Naive thymus-derived CD4-positive, alpha-beta T cell (primary cell): ENCODE measurements at regions of chr15 and their contacts with region 1.

Region 1: GRCh38 chr15:43329960-43330779 is at the start of gene LCMT2:
- DNase-seq: peak; percentile 80 to 95 (median 92)
- ATAC-seq: peak; percentile 92
- H3K4me3 ChIP-seq: peak within 1 kb of the TSS; percentile 84
- H3K4me3 Mint-ChIP-seq: peak within 1 kb of the TSS; percentile 89 to 98 (median 96)
- H3K27ac ChIP-seq: peak within 1 kb of the TSS; percentile 88
- H3K27ac Mint-ChIP-seq: peak within 1 kb of the TSS; percentile 93 to 99 (median 99)
- H3K4me1 ChIP-seq: peaks cover 19 to 22% of the 10 kb centered on the region in 2 donors
- H3K4me1 Mint-ChIP-seq: peaks cover 19 to 54% (median 46%) of the 10 kb centered on the region in 7 donors
- H3K27me3 ChIP-seq: no peaks in the 10 kb centered on the region
- H3K27me3 Mint-ChIP-seq: peaks cover 0 to 4% (median 0%) of the 10 kb centered on the region in 5 donors
- total RNA-seq, gene LCMT2: 10.1 to 19.1 (median 15.0) TPM

Region 2: GRCh38 chr15:42575188-42576039 is 754.8 kb before region 1 on chr15 and contains the start of gene STARD9:
- CTCF ChIA-PET with region 1: no interaction called
- POLR2A ChIA-PET with region 1: no interaction called
- intact Hi-C with region 1: loop called in 1 of 2 experiments (anchors 2 kb)
- DNase-seq: peak; percentile 84 to 96 (median 93)
- ATAC-seq: peak; percentile 96
- H3K4me3 ChIP-seq: peak within 1 kb of the TSS; percentile 81
- H3K4me3 Mint-ChIP-seq: peak within 1 kb of the TSS; percentile 74 to 95 (median 92)
- H3K27ac ChIP-seq: peak within 1 kb of the TSS; percentile 58
- H3K27ac Mint-ChIP-seq: peak within 1 kb of the TSS; percentile 10 to 84 (median 76)
- H3K4me1 ChIP-seq: peaks cover 7 to 12% of the 10 kb centered on the region in 2 donors
- H3K4me1 Mint-ChIP-seq: peaks cover 14 to 36% (median 19%) of the 10 kb centered on the region in 7 donors
- H3K27me3 ChIP-seq: no peaks in the 10 kb centered on the region
- H3K27me3 Mint-ChIP-seq: peaks cover 6 to 35% (median 13%) of the 10 kb centered on the region in 5 donors
- total RNA-seq, gene STARD9: 2.4 to 10.5 (median 4.5) TPM

Region 3: GRCh38 chr15:42920519-42921227 is 409.5 kb before region 1 on chr15 and contains the start of gene TTBK2:
- CTCF ChIA-PET with region 1: no interaction called
- POLR2A ChIA-PET with region 1: no interaction called
- intact Hi-C with region 1: loop called in 1 of 2 experiments (anchors 1 kb)
- DNase-seq: peak; percentile 93 to 98 (median 97)
- ATAC-seq: peak; percentile 98
- H3K4me3 ChIP-seq: peak within 1 kb of the TSS; percentile 89
- H3K4me3 Mint-ChIP-seq: peak within 1 kb of the TSS; percentile 93 to 100 (median 97)
- H3K27ac ChIP-seq: peak within 1 kb of the TSS; percentile 71
- H3K27ac Mint-ChIP-seq: peak within 1 kb of the TSS; percentile 88 to 97 (median 95)
- H3K4me1 ChIP-seq: peaks cover 4 to 5% of the 10 kb centered on the region in 2 donors
- H3K4me1 Mint-ChIP-seq: peaks cover 14 to 40% (median 29%) of the 10 kb centered on the region in 7 donors
- H3K27me3 ChIP-seq: no peaks in the 10 kb centered on the region
- H3K27me3 Mint-ChIP-seq: peaks cover 0 to 3% (median 0%) of the 10 kb centered on the region in 5 donors
- total RNA-seq, gene TTBK2: 15.7 to 30.5 (median 28.8) TPM

Region 4: DNA sequence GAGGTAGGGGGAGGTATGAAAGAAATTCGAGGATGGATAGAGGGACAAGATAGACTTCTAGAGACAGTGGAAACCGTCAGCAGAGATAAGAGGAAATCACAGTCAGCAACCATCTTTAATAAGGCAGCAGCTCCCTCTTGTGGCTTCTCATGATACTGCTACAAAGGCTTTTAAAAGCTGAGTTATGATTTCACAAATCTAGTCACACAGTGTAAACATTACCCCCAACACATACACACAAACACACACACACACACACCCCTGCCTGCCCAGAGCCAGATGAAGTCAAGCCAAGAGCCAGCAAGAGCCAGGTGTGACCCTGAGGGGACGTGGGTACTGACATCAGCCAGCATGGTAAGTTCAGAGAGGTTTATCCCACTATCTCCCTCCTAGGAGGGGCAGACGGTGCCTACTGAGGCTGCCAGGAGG is 44.5 kb before region 1 on chr15:
- CTCF ChIA-PET with region 1: no interaction called
- POLR2A ChIA-PET with region 1: no interaction called
- intact Hi-C with region 1: loop called in 1 of 2 experiments (anchors 2 kb)
- DNase-seq: peak in 7 of 9 donors; percentile 32 to 68 (median 61)
- ATAC-seq: peak; percentile 88
- H3K4me3 ChIP-seq: no peak overlapping the region
- H3K4me3 Mint-ChIP-seq: no peak overlapping the region
- H3K27ac ChIP-seq: no peak overlapping the region
- H3K27ac Mint-ChIP-seq: peak overlapping the region in 1 of 9 donors; percentile 25
- H3K4me1 ChIP-seq: no peaks in the 10 kb centered on the region
- H3K4me1 Mint-ChIP-seq: peaks cover 0 to 9% (median 4%) of the 10 kb centered on the region in 7 donors
- H3K27me3 ChIP-seq: no peaks in the 10 kb centered on the region
- H3K27me3 Mint-ChIP-seq: peaks cover 0 to 11% (median 5%) of the 10 kb centered on the region in 5 donors

Region 5: DNA sequence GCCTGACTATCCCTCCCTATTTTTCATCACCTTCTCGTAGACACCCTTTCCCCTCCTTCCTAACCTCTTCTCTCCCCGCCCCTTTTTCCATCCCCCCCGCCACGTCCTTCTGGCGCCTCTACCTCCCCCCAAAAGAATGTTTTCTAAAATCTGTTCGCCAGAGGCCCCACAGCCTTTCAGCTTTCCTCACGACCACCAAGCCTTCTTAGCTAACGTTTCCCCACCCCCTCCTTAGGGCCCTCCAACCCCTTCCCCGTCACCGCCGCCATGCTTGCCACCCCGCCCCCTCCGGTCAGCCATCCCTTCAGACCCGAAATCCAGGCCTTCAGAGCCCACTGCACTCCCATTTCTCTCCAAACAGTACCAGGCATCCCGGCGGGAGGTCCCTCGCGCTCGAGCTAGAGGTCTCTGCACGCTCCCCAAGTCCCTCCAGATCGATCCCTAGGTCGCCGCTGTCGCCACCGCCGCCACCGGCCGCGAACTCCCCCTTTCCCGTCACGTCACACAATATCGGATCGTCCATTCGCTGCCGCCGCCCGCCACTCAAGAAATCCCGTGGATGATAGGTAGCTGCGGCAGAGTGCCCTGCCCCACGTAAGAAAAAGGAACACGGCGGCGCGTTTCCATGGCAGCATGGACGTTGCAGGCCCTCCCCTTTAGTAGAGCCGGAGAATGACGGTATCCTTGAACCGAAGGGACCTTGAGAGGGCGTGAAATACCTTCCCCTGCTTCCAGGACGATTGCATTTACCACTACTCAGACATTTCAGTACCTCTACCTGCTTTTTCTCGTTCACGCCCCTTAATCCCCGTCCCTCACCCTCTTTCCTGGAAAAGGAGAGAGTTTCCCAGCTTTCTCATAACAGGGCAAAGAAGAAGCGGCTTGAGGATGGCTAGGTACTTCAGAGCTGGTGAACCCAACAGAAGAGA is 162.8 kb after region 1 on chr15 and contains the start of gene TP53BP1:
- CTCF ChIA-PET with region 1: no interaction called
- POLR2A ChIA-PET with region 1: no interaction called
- intact Hi-C with region 1: loop called in 1 of 2 experiments (anchors 1 kb)
- DNase-seq: peak; percentile 82 to 97 (median 91)
- ATAC-seq: peak; percentile 99
- H3K4me3 ChIP-seq: peak within 1 kb of the TSS; percentile 89
- H3K4me3 Mint-ChIP-seq: peak within 1 kb of the TSS; percentile 87 to 99 (median 96)
- H3K27ac ChIP-seq: peak within 1 kb of the TSS; percentile 93
- H3K27ac Mint-ChIP-seq: peak within 1 kb of the TSS; percentile 83 to 99 (median 96)
- H3K4me1 ChIP-seq: peaks cover 11 to 13% of the 10 kb centered on the region in 2 donors
- H3K4me1 Mint-ChIP-seq: peaks cover 23 to 44% (median 33%) of the 10 kb centered on the region in 7 donors
- H3K27me3 ChIP-seq: no peaks in the 10 kb centered on the region
- H3K27me3 Mint-ChIP-seq: no peaks in the 10 kb centered on the region
- total RNA-seq, gene TP53BP1: 34.5 to 41.6 (median 40.6) TPM

Region 6: GRCh38 chr15:43824302-43825246 is 494.4 kb after region 1 on chr15 and contains the start of gene MFAP1:
- CTCF ChIA-PET with region 1: no interaction called
- POLR2A ChIA-PET with region 1: no interaction called
- intact Hi-C with region 1: loop called in 1 of 2 experiments (anchors 2 kb)
- DNase-seq: peak; percentile 63 to 94 (median 89)
- ATAC-seq: peak; percentile 94
- H3K4me3 ChIP-seq: peak within 1 kb of the TSS; percentile 100
- H3K4me3 Mint-ChIP-seq: peak within 1 kb of the TSS; percentile 94 to 100 (median 98)
- H3K27ac ChIP-seq: peak within 1 kb of the TSS; percentile 97
- H3K27ac Mint-ChIP-seq: peak within 1 kb of the TSS; percentile 95 to 99 (median 98)
- H3K4me1 ChIP-seq: peaks cover 32 to 34% of the 10 kb centered on the region in 2 donors
- H3K4me1 Mint-ChIP-seq: peaks cover 37 to 81% (median 53%) of the 10 kb centered on the region in 7 donors
- H3K27me3 ChIP-seq: no peaks in the 10 kb centered on the region
- H3K27me3 Mint-ChIP-seq: no peaks in the 10 kb centered on the region
- total RNA-seq, gene MFAP1: 8.5 to 37.3 (median 21.8) TPM

Region 7: DNA sequence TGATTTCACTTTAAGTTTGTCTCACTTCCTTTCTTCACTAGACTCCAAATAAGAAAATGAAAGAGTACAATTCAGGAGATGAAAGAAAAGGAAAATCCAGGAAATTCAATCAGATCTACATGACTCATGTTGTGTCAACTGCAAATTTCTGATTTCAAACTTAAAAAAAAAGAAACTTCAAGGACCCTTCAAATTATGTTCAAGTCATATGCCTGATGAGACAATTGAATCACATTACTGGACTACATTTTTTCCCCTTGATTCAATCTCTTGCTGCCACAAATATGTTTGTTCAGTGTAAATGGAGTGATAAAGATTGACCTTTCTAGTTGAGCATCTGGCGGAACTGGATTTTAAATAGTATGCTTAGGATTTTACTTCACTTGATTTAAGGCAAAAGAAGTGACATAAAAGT is 827.5 kb after region 1 on chr15:
- CTCF ChIA-PET with region 1: no interaction called
- POLR2A ChIA-PET with region 1: no interaction called
- intact Hi-C with region 1: no loop called
- DNase-seq: no peak
- ATAC-seq: no peak
- H3K4me3 ChIP-seq: no peak overlapping the region
- H3K4me3 Mint-ChIP-seq: no peak overlapping the region
- H3K27ac ChIP-seq: no peak overlapping the region
- H3K27ac Mint-ChIP-seq: no peak overlapping the region
- H3K4me1 ChIP-seq: no peaks in the 10 kb centered on the region
- H3K4me1 Mint-ChIP-seq: no peaks in the 10 kb centered on the region
- H3K27me3 ChIP-seq: no peaks in the 10 kb centered on the region
- H3K27me3 Mint-ChIP-seq: peaks cover 29 to 35% (median 31%) of the 10 kb centered on the region in 5 donors